ENCODE measurements at regions of chr1 and their contacts with region 1.

Region 1: GRCh38 chr1:211578640-211579433 is at the start of gene SLC30A1:
- DNase-seq: peak; percentile 100
- ATAC-seq: peak; percentile 95 to 97
- total RNA-seq, gene SLC30A1: 11.0 to 13.9 TPM

Region 2: DNA sequence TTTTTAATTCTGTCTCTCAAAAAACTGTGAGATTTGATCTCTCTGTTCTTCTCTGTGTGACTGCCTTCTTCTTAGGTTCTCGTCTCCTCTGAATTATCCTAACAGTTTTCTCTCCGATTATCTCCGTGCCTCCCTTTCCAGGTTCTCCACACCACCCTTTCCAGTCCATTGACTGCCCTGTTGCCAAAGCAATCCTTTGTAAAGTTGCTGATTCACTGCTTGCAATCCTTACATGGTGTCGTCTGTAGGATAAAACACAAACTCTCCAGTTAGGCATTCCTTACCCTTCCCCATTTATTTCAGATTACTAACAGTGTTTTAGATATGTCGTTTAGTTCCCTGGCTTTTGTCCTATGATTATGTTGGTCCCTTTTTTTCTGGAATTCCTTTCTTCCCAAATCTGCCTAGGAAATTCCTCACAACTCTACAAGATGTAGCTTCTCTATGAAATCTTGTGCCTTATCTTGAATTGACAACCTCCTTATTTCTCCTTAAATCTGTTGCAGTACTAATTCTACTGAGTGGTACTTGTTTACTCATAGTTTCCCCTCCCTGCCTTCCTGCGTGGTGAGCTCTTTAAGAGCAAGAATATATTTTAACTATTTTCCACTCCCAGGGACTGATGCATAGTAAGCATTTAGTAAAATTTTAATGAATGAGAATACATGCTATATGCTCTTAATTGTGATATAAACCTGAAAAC is 297.4 kb before region 1 on chr1:
- intact Hi-C with region 1: no loop called
- DNase-seq: no peak
- ATAC-seq: peak in 1 of 2 donors; percentile 44

Region 3: DNA sequence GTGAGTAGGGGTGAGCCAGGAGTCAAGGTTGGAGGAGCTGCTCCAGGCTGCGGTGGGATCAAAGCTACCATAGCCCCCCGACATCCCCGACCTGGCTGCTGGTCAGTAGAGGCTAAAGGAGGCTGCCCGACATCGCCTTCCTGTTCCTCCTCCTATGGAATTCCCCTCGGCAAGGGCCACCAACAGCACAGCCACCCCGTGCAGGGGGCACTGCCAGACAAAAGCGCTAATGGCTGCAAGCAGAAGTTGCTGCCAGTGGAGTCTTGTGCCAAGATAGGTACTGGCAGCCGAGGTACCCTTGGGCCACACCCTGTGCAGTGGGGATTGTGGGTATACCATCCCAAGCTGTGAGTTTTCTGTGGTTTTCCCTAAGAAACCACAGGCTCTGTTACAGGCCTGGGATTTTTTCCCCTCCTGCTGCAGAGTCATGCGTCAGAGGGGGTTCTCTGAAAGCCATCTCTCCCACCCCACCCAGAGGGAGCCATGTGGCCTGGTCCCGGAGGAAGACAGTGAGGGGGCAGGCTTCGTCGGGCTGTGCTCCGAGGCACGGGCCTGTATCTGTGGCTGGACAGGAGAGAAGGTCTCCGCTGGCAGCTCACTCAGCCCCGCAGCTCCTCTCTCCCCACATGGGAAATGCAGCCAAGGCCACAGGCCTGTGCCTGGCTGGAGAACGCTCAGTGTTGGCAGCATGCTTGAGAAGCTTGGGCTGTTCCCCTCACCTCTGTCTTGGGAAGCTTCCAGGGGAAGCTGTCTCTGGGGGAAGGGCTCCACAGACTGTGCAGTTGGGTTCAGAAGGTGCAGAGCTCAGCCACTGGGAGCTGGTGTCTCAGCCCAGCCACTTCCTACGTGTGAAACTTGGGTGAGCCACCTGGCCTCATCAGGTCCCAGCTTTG is 54.0 kb after region 1 on chr1:
- intact Hi-C with region 1: loop called in 1 of 2 experiments (anchors 5 kb)
- DNase-seq: peak; percentile 67
- ATAC-seq: peak; percentile 81 to 83

Region 4: DNA sequence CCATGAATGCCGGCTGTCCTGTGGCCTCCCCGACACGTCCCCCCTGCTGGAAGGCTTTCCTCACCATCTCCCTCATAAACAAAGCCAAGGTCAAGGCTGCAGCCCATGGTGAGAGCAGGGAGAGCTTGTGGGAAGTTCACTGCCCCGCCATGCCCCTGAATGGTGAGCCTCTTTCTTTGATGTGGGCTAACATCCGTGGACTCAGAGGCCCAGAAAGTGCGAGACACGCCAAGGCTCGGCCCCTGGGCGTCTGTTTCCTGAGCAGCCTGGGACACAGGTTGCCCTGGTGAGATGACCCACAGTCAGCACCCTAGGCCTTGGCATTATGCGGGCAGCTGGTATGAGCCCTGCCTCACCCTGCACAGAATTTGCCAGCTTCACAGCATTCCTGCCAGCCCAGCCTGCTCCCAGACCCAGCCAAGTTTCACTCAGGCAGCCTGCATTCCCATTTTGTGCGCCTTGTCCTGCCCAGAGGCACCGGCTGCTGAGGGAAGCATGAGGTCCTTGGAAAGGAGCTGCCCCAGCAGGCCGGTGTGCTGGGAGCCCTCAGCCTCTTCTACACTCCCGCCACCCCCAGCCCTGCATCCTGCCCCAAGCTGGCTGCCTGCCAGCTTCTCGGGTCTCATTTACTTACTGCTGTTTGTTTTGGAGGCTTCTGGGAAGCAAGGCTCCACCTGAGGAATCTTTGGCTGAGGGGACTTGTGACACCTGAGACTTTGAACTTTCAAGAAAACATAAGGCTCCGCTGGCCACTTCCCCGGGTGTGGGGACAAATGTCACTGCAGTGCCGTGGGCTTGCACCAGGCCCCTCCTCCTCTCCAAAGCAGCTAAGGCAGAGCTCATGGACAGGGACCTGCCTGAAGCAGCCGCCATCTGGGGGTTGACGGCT is 64.7 kb after region 1 on chr1:
- intact Hi-C with region 1: loop called (anchors 2 to 5 kb)
- DNase-seq: no peak
- ATAC-seq: peak; percentile 74 to 75

Region 5: DNA sequence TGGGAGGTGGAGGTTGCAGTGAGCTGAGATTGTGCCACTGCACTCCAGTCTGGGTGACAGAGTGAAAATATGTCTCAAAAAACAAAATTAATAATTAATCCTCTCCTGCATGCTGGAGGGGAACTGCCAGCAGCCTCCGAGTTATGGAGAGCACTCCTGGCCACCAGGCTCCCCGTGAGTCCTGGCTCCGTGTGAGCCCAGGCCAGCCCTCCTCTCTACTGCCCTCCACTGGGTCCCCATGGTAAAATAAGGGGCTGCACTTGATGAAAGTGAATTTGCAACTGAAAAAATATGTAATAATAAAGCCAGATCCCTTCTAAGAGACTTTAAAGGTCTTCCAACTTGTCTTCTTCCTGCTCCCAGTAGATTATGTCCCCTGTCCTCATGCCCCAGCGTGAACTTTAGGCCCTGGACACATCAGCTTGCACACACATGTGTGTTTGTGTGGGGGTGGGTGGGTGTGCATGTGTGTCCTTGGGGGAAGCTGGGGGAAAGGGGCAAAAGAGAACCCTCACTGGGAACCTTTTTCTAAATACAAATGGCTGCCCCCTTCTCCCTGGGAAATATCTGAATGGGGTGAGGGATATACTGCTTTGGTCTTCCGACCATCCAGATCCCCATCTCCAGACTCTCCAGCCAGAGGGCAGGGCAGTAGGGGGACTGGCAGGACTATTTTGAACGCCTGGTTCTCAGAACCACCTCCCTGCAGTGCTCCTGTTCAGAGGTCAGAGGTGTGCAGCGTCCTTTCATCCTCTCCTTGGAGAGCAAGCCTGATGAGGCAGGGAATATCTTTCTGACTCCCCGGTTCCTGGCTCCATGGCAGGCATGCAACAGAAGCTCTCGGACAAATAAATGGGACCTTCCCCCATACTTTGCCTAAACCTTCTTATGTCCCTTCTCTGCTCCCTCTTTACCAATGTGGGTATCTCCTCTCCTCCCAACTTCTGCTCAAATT is 70.4 kb after region 1 on chr1:
- intact Hi-C with region 1: loop called (anchors 2 to 5 kb)
- DNase-seq: peak; percentile 60
- ATAC-seq: peak in 1 of 2 donors; percentile 63

Region 6: GRCh38 chr1:211851174-211851573 is 272.3 kb after region 1 on chr1:
- intact Hi-C with region 1: no loop called
- DNase-seq: no peak
- ATAC-seq: no peak